Left cardiac atrium (tissue), 4 donors: ENCODE measurements at regions of chr10 and their contacts with region 1.

Region 1: DNA sequence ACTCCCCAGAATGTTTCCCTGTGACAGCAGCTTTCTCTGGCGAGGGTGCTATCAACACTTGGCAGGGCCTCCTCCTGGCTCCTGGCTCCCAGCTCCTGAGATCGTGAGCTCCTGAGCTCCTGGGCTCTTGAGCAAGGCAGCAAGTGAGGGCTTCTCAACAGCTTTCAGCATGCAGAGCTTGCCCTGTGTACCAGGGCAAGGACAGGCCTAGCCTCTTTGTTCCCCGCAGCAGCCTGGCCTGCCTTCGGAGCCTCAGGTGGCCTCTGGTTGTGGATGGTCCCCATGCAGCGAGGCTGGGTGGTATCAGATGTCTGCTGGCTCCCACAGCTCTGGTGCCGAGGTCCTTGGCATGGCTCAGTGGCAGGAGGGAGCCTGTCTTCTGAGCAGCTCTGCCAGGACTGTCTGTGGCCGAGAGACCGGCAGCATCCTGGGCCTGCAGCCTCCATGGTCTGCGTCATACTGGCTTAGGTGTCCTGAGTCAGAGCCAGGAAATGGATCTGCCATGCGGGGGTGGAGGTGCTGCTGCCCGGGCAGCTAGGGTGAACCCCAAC is 44.2 kb downstream of the ZMIZ1 start:
- DNase-seq: peak; percentile 77
- ATAC-seq: peak; percentile 60 to 82

Region 2: GRCh38 chr10:78925800-78926319 is 187.1 kb before region 1 on chr10:
- intact Hi-C with region 1: no loop called
- DNase-seq: no peak
- ATAC-seq: peak in 1 of 2 donors; percentile 94

Region 3: GRCh38 chr10:79079490-79080355 is 33.2 kb before region 1 on chr10:
- intact Hi-C with region 1: loop called in 1 of 2 experiments (anchors 5 kb)
- DNase-seq: peak; percentile 69
- ATAC-seq: peak; percentile 13 to 65